CD4-positive, alpha-beta memory T cell (primary cell): ENCODE measurements at regions of chr20 and their contacts with region 1.

Region 1: GRCh38 chr20:31856516-31856915 is 11.1 kb upstream of the FOXS1 start:
- DNase-seq: no peak
- H3K4me3 ChIP-seq: no peak overlapping the region
- H3K4me3 Mint-ChIP-seq: no peak overlapping the region
- H3K27ac ChIP-seq: no peak overlapping the region
- H3K27ac Mint-ChIP-seq: no peak overlapping the region
- H3K4me1 ChIP-seq: peaks cover 12% of the 10 kb centered on the region
- H3K4me1 Mint-ChIP-seq: peaks cover 0 to 11% (median 0%) of the 10 kb centered on the region in 4 donors
- H3K27me3 ChIP-seq: peaks cover 29% of the 10 kb centered on the region
- H3K27me3 Mint-ChIP-seq: peaks cover 11 to 24% of the 10 kb centered on the region in 2 donors

Region 2: DNA sequence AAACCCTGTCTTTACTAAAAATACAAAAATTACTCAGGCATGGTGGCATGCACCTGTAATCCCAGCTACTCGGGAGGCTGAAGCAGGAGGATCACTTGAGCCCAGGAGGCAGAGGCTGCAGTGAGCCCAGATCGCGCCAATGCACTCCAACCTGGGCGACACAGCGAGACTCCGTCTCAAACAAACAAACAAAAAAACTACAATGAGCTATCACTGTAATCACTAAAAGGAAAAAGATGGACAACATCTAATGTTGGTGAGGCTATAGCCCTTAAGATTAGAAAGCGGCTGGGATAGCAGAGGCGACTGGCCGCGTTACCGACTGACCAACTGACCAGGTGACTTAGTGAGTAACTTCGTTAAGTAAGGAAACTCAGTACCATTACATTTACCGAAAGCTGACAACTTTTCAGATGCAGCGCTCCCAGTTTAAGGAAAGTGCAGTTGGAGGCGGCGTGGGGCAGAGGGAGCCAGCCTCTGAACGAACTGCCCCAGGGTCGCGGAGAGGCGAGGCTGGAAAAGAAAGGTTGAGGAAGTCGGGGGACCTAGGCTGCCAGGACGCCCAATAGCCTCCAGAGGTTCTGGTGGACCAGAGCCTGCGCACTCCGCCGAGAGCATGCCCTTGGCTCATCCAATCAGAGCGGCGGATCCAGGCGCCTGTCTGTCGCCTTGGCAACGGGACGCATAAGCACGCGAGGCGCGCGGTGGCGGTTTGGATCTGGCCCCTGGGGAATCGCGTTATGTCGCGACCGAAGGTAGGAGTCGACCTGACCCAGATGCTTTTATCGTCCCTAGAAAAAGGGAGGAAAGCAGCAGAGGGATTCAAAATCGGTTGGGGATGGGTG is 22.8 kb after region 1 on chr20:
- CTCF ChIA-PET with region 1: interaction called, 7 read pairs
- POLR2A ChIA-PET with region 1: no interaction called
- intact Hi-C with region 1: loop called (anchors 1 kb)
- DNase-seq: peak; percentile 69 to 84 (median 76)
- H3K4me3 ChIP-seq: peak overlapping the region; percentile 21 to 69
- H3K4me3 Mint-ChIP-seq: peak overlapping the region; percentile 90 to 96 (median 94)
- H3K27ac ChIP-seq: no peak overlapping the region
- H3K27ac Mint-ChIP-seq: peak overlapping the region; percentile 78 to 97 (median 89)
- H3K4me1 ChIP-seq: peaks cover 7% of the 10 kb centered on the region
- H3K4me1 Mint-ChIP-seq: peaks cover 6 to 15% (median 8%) of the 10 kb centered on the region in 4 donors
- H3K27me3 ChIP-seq: no peaks in the 10 kb centered on the region
- H3K27me3 Mint-ChIP-seq: peaks cover 8% of the 10 kb centered on the region in 2 donors

Region 3: DNA sequence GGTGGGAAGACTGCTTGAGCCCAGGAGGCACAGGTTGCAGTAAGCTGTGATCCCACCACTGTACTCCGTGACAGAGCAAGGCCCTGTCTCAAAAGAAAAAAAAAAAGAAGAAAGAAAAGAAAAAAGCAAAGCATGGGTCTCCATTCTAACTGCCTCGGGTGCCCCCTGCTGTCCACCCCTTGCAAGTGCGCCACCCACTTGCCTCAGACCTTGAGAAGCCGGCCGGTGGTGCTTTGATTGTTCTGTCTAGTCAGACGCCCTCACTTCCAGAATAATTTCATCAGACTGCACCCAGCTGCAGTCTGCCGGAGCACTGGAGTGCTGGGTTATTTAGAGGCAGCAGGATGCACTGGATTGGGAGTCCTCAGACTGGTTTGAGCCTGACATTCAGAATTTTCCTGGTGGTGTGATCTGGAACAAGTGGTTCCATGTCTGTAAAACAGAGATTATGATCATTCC is 235.4 kb after region 1 on chr20:
- CTCF ChIA-PET with region 1: interaction called, 7 read pairs
- POLR2A ChIA-PET with region 1: no interaction called
- intact Hi-C with region 1: loop called (anchors 2 kb)
- DNase-seq: peak; percentile 60 to 71 (median 69)
- H3K4me3 ChIP-seq: no peak overlapping the region
- H3K4me3 Mint-ChIP-seq: peak overlapping the region in 1 of 8 donors; percentile 43
- H3K27ac ChIP-seq: no peak overlapping the region
- H3K27ac Mint-ChIP-seq: no peak overlapping the region
- H3K4me1 ChIP-seq: no peaks in the 10 kb centered on the region
- H3K4me1 Mint-ChIP-seq: peaks cover 0 to 4% (median 0%) of the 10 kb centered on the region in 4 donors
- H3K27me3 ChIP-seq: no peaks in the 10 kb centered on the region
- H3K27me3 Mint-ChIP-seq: peaks cover 3 to 4% of the 10 kb centered on the region in 2 donors